Activated naive CD4-positive, alpha-beta T cell treated with anti-CD3 and anti-CD28 coated beads, Interleukin-2, amount 10 ng/mL, durations not matched to agents 7 days and 5 days (primary cell): ENCODE measurements at regions of chr1 and their contacts with region 1.

Region 1: GRCh38 chr1:110766025-110766647 is 91.4 kb upstream of the KCNA3 start:
- DNase-seq: peak; percentile 71
- H3K4me3 Mint-ChIP-seq: no peak overlapping the region
- H3K27ac Mint-ChIP-seq: no peak overlapping the region
- H3K4me1 Mint-ChIP-seq: peaks cover 13% of the 10 kb centered on the region
- H3K27me3 Mint-ChIP-seq: peaks cover 21% of the 10 kb centered on the region

Region 2: DNA sequence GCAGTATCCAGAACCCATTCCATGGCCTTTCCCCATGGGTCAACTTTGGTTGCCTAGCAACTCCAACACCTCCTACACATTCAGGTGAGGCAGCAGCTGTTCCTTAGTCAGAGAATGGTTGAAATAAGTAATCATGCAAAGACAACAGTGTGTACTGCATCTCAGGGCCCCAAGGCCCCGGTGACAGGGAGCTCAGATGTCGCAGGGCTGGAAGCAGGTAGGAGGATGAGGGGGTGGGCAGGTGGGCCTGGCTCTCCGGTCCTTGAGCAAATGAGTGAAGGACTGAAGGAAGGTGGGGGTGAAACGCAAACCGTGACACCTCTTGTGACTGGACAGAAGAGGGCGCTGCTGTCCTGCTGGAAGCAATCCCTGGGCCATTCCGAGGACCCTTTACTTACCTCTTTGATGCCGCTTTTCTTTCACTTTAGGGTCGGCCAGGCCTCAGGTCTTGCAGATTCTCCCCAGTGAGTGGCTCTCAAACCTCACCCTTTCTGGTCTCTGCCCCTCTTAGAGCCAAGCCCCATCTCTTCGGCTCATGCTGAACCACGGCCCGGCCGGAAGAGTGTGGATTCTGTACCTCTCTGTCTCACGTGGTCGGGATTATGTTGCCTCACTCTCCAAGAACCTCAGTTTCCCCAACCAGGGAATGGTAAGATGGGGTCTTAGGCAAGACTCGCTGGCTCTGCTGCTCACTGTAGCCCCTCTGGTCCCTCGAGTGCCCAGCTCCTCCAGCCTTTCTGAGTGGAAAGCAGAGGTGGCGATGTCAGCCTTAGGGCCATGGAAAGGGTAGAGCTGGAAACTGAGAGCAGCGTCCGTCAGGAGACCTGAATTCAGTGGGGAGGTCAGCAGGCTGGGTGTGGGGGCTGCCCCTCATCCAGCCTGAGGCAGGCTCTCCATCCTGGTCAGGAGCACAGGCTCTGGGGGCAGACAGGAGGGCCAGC is 241.6 kb before region 1 on chr1:
- CTCF ChIA-PET with region 1: interaction called, 12 read pairs
- DNase-seq: peak; percentile 69
- H3K4me3 Mint-ChIP-seq: no peak overlapping the region
- H3K27ac Mint-ChIP-seq: no peak overlapping the region
- H3K4me1 Mint-ChIP-seq: no peaks in the 10 kb centered on the region
- H3K27me3 Mint-ChIP-seq: peaks cover 79% of the 10 kb centered on the region

Region 3: DNA sequence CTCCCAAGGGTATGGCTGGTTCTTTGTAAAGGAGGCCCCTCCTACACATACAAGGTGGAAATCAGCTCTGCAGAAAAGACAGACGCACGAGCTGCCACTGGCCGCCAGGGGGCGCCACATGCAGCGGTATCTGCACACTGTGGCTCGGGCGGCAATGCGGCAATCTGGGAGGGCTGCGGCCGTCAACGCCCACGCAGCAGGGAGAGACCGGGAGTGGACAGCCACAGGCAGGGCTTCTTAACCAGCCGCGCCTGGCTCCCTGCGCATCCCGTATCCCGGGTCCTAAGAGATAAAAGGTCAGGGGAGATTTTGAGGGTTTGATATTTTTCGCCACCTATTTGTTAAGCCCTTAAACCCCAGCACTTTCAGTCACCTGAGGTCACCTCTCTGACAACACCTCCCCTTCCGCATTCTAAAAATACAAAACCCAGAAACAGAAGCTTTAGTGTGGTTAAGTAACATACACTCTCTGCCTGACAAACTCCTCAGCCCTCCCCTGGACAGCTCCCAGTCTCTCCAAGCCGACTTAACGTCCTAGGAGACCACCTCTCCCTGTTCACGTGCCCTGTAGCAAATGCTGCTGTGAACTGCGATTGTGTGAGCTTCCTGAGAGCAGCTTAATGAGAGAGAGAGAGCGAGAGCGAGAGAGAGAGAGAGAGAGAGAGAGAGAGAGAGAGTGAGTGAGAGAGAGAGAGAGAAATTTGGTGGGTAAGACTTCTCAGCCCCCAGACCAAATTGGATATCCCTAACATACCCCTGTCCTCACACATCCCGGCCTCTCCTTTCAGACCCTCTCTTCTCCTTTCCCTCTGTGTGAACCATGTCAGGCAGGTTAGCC is 146.5 kb before region 1 on chr1:
- CTCF ChIA-PET with region 1: interaction called, 178 read pairs
- DNase-seq: peak; percentile 93
- H3K4me3 Mint-ChIP-seq: peak overlapping the region; percentile 82
- H3K27ac Mint-ChIP-seq: peak overlapping the region; percentile 98
- H3K4me1 Mint-ChIP-seq: peaks cover 54% of the 10 kb centered on the region
- H3K27me3 Mint-ChIP-seq: peaks cover 8% of the 10 kb centered on the region

Region 4: DNA sequence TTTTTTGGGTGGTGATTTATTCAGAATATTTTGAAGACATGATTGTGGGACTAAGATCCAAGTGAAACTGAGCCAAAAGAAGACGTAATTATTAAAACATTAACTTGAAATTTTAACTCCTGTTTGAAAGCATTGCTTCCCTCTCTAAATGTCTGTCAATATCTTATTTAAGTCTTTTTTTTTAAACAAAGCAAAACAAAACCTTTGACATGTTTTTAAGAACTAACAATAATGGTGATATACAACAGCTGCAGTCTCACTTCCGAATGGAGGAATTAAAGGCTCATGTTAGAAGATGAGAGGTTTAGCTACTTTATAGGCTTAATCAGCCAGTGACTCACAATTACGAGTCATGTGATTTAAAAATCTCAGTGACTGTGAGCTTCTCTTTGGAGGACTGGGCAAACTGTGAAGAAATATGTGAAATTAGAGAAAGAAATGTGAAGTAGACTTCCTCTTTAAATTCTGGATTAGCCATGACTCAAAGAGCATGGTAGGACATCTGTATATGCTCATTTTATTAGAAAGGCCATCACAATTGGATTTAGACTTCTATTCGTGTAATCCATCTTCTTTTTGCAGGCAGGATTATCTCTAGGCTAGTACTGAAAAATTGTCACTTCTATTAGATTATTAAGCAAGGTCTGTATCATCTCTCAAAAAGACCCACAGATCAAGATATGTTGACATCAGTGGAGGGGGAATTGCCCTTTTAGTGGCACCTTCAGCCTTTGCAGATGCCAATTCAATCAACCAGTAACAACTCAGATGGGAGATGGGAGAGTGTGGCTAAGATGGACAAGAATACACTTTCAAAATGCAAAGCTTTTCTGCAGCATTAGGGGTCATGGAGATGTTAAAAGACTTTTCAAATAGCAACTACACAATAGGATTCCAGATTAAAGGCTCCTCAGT is 120.1 kb before region 1 on chr1:
- CTCF ChIA-PET with region 1: interaction called, 14 read pairs
- DNase-seq: no peak
- H3K4me3 Mint-ChIP-seq: no peak overlapping the region
- H3K27ac Mint-ChIP-seq: peak overlapping the region; percentile 24
- H3K4me1 Mint-ChIP-seq: peaks cover 47% of the 10 kb centered on the region
- H3K27me3 Mint-ChIP-seq: no peaks in the 10 kb centered on the region

Region 5: GRCh38 chr1:110674337-110675059 is 91.6 kb before region 1 on chr1 and contains the start of gene KCNA3:
- CTCF ChIA-PET with region 1: interaction called, 24 read pairs
- DNase-seq: peak; percentile 82
- H3K4me3 Mint-ChIP-seq: peak within 1 kb of the TSS; percentile 95
- H3K27ac Mint-ChIP-seq: peak within 1 kb of the TSS; percentile 98
- H3K4me1 Mint-ChIP-seq: peaks cover 41% of the 10 kb centered on the region
- H3K27me3 Mint-ChIP-seq: peaks cover 10% of the 10 kb centered on the region

Region 6: DNA sequence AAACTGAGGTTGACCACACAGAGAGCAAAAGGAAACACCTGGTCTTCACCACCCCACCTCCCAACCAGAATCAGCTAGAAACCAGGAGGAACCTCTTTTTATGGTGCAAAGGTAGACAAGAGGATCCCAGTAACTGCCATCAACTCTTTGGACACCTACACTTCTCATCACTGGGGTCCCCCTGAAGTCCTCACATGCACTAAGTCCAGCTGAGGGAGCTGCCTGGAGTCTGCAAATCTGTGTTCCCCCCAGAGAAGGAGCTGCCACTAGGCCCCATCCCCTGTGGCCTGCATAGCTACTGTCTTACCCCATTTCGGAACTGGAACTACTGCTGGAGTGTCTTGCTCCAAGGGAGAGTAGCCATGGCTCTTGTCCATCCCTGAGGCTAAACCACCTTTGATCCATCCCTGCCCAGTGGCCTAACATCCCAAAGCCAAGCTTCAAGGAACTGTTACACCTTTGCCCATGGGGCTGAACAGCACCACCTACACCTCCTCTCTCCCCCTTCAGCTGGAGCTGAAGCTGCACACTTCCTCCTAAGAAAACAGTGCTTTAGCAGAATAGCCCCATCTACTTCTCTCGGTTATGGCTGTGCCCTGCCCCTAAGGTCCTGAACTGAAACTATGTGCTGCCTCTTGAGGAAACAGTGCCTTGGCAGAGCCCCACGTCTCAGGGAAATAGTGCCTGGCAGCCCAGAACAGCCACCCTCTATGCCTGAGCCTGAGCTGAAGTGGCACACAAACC is 21.4 kb after region 1 on chr1:
- CTCF ChIA-PET with region 1: interaction called, 63 read pairs
- DNase-seq: peak; percentile 77
- H3K4me3 Mint-ChIP-seq: peak overlapping the region; percentile 66
- H3K27ac Mint-ChIP-seq: peak overlapping the region; percentile 97
- H3K4me1 Mint-ChIP-seq: peaks cover 73% of the 10 kb centered on the region
- H3K27me3 Mint-ChIP-seq: no peaks in the 10 kb centered on the region

Region 7: DNA sequence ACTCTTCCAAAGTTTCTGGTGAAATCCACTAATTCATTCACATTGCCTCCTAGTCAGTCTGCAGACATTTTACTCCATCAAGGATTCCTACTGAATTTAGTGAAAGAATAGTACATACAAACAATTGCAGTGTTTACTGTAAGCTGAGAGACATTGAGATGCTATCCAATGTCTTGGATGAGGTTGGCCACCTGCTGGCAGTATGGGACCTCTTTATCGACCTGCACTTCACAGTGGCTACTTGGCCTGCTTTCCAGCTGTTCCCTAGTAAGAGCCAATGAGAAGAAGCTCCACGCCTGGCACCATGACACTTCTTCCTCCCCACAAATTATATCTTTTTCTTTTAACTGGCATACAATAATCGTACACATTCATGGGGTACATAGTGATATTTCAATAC is 249.1 kb after region 1 on chr1:
- CTCF ChIA-PET with region 1: no interaction called
- DNase-seq: no peak
- H3K4me3 Mint-ChIP-seq: no peak overlapping the region
- H3K27ac Mint-ChIP-seq: no peak overlapping the region
- H3K4me1 Mint-ChIP-seq: no peaks in the 10 kb centered on the region
- H3K27me3 Mint-ChIP-seq: peaks cover 18% of the 10 kb centered on the region